Aorta (tissue), 5 donors: ENCODE measurements at regions of chr3 and their contacts with region 1.

Region 1: DNA sequence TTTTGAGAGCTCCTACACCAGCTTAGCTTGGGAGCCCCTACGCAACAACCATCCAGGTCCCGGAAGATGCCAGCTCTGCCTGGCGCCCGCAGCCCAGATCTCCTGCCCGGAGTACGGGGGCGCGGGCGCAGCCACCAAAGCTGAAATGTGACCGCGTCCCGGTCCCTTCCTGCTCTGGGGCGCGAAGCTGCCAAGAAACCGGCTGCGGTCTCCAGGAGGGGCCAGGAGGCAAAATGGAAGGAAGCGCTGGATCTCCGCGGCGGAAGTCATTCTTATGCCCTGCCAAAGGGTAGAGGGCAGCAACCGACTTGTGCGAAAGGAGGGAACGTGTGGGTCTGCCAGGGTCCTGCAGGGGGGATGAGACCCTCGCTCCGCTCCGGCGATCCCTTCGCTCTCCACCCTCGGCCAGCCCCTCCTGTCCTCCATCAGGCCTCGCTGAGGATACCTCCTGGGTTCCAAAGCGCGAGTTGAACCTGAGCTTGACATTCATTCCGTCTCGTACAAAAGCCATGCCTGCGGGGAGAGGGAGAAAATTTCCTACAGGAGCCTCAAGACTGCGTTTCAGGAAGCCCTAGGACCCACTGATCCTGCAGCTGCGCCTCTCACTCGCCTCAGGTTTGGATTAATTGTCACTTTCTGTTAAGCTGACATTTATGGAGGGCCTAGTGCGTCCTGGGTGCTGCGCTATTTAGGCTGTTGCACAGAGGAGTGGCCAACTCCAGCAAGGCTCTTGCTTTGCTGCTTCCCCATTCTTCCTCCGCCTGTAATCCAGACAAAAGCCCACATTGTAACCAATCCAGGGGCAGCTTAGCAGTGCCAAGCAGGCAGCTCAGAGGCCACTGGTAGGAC is 98.3 kb upstream of the VGLL3 start:
- DNase-seq: peak; percentile 84 to 85
- ATAC-seq: peak; percentile 94
- H3K4me3 ChIP-seq: peak overlapping the region; percentile 66 to 88
- H3K27ac ChIP-seq: peak overlapping the region; percentile 89 to 99
- H3K4me1 ChIP-seq: peaks cover 0 to 2% of the 10 kb centered on the region in 2 donors
- H3K27me3 ChIP-seq: no peaks in the 10 kb centered on the region

Region 2: GRCh38 chr3:86774082-86774691 is 315.0 kb before region 1 on chr3:
- intact Hi-C with region 1: loop called (anchors 2 to 5 kb)
- DNase-seq: no peak
- ATAC-seq: no peak
- H3K4me3 ChIP-seq: no peak overlapping the region
- H3K27ac ChIP-seq: no peak overlapping the region
- H3K4me1 ChIP-seq: no peaks in the 10 kb centered on the region
- H3K27me3 ChIP-seq: no peaks in the 10 kb centered on the region

Region 3: GRCh38 chr3:86856711-86857110 is 232.5 kb before region 1 on chr3:
- intact Hi-C with region 1: no loop called
- DNase-seq: no peak
- ATAC-seq: no peak
- H3K4me3 ChIP-seq: no peak overlapping the region
- H3K27ac ChIP-seq: no peak overlapping the region
- H3K4me1 ChIP-seq: no peaks in the 10 kb centered on the region
- H3K27me3 ChIP-seq: no peaks in the 10 kb centered on the region

Region 4: DNA sequence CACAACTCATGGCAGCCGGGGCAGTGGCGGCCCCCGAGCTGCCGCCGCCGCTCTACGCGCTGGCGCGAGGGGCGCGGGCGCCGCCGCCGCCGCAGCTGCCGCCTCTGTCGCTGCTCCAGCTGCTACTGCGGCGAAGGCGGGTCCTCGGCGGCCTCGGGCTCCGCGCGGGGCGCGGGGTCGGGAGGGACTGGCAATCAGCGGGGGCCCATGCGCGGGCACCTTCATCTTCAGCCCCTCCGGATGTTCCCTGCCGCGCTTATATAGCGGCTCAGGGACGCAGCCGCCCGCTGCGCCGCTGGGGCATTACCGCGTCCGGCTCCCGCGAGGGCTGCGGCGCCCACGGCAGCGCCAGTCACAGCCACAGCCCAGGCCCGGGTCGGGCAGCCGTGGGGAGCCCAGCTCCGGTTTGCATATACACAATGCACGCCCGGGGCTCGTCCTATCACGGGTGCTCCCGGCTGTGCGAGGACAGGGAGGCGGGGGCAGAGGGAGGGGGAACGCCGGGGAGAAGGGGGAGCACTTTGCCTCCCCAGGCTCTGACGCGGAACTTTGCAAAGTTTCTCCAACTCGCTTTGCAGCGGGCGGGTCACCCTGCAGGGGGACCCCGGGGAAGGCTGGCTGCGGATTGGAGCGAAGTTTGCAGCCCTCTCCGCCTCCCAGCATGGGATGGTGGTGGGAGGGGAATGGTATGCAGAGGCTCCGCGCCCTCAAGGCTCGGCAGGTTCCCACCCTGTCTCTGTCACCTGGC is 98.3 kb before region 1 on chr3 and contains the start of gene VGLL3:
- intact Hi-C with region 1: loop called in 1 of 2 experiments (anchors 5 kb)
- DNase-seq: peak; percentile 84 to 92
- ATAC-seq: peak; percentile 89
- H3K4me3 ChIP-seq: peak within 1 kb of the TSS; percentile 80 to 89
- H3K27ac ChIP-seq: peak within 1 kb of the TSS; percentile 47 to 87
- H3K4me1 ChIP-seq: peaks cover 1 to 3% of the 10 kb centered on the region in 2 donors
- H3K27me3 ChIP-seq: no peaks in the 10 kb centered on the region
- total RNA-seq, gene VGLL3: 49.8 to 155 TPM

Region 5: DNA sequence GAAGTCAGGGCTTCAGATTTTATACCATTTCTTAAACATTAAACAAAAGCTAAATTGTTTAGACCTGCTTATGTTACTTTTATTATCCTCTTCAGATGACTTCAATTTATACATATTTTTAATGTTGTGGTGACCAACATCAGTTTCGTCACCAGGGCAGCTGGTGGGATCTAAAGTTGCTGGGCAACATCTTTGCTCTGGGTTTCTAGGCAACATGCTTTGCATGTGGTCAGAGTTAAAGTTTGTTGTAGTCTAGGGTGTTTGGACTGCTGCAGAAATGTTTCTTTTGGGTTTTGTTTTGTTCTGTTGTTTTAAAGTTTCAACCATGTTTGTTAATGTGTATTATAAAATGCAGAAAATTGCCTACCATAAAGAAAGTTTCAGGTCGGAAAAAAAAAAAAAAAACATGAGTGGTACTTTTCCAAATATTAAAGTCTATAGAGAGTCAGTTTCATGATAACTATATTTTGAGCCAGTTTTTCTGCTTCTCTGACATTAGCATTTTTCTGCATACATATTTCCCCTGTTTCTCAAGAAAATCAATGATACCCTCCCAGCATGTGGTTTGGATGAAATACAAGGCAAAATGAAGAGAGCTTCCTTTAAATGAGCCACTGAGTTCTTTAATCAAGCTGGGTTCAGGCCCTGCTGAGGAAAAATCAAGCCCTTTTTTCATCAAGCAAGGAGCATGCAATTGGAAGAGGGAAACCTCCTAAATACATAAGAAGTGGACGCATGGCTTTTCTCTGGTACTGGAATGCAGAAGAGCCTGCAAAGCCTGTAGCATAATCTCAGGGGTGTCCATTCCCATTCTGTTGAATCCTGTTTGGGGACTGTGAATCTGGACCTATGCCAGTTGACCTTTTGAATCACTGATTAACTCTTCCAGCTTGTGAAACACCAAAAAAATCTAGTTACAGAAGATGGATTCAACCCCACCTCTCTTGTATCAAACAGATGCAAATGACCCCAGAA is 63.3 kb before region 1 on chr3:
- intact Hi-C with region 1: no loop called
- DNase-seq: no peak
- ATAC-seq: no peak
- H3K4me3 ChIP-seq: no peak overlapping the region
- H3K27ac ChIP-seq: no peak overlapping the region
- H3K4me1 ChIP-seq: no peaks in the 10 kb centered on the region
- H3K27me3 ChIP-seq: no peaks in the 10 kb centered on the region

Region 6: GRCh38 chr3:87041191-87041590 is 48.0 kb before region 1 on chr3:
- intact Hi-C with region 1: no loop called
- DNase-seq: no peak
- ATAC-seq: no peak
- H3K4me3 ChIP-seq: no peak overlapping the region
- H3K27ac ChIP-seq: no peak overlapping the region
- H3K4me1 ChIP-seq: no peaks in the 10 kb centered on the region
- H3K27me3 ChIP-seq: no peaks in the 10 kb centered on the region

Region 7: GRCh38 chr3:87167628-87168456 is 78.6 kb after region 1 on chr3:
- intact Hi-C with region 1: loop called (anchors 5 kb)
- DNase-seq: no peak
- ATAC-seq: no peak
- H3K4me3 ChIP-seq: peak overlapping the region in 1 of 2 donors; percentile 3
- H3K27ac ChIP-seq: no peak overlapping the region
- H3K4me1 ChIP-seq: no peaks in the 10 kb centered on the region
- H3K27me3 ChIP-seq: no peaks in the 10 kb centered on the region

Region 8: DNA sequence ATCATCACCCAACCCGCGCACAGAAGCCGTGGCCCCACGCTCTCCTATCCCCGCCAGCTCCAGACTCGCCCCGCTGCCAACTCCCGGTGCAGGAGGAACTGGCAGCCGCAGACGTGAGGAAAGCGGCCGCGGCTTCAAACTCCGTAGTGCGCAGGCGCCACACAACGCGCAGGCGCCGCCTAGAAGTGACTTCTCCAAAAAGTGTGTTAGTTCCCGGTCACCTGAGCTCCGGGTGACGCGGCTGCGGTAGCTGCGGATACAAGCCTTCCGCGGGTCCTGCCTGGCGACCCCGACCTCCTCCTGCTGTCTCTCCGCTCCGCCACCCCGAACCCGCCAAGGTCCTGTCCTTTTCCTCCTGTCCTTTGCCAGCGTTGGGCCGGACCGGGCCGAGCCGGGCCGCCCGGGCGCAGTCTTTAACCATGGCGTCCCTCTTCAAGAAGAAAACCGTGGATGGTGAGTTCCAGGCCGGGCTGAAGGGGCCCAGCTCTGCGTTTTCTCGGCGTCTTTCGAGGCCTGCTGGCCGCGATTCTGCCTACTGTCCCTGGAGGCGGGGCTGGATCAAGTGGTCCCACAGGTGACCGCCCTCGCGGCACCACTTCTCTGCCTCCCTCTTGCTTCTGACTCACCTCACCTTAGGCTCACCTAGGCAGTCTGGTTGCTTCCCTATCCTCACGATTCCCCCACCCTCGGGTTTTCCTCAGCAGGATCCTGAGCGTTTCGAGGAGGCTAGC is 138.1 kb after region 1 on chr3 and contains the start of gene CHMP2B:
- intact Hi-C with region 1: loop called in 1 of 2 experiments (anchors 5 kb)
- DNase-seq: peak; percentile 96 to 98
- ATAC-seq: peak; percentile 98
- H3K4me3 ChIP-seq: peak within 1 kb of the TSS; percentile 62 to 73
- H3K27ac ChIP-seq: peak within 1 kb of the TSS in 1 of 2 donors; percentile 42
- H3K4me1 ChIP-seq: peaks cover 0 to 5% of the 10 kb centered on the region in 2 donors
- H3K27me3 ChIP-seq: no peaks in the 10 kb centered on the region
- total RNA-seq, gene CHMP2B: 43.7 to 51.3 TPM